Heart right ventricle (tissue), 16 donors: ENCODE measurements at regions of chr20 and their contacts with region 1.

Region 1: DNA sequence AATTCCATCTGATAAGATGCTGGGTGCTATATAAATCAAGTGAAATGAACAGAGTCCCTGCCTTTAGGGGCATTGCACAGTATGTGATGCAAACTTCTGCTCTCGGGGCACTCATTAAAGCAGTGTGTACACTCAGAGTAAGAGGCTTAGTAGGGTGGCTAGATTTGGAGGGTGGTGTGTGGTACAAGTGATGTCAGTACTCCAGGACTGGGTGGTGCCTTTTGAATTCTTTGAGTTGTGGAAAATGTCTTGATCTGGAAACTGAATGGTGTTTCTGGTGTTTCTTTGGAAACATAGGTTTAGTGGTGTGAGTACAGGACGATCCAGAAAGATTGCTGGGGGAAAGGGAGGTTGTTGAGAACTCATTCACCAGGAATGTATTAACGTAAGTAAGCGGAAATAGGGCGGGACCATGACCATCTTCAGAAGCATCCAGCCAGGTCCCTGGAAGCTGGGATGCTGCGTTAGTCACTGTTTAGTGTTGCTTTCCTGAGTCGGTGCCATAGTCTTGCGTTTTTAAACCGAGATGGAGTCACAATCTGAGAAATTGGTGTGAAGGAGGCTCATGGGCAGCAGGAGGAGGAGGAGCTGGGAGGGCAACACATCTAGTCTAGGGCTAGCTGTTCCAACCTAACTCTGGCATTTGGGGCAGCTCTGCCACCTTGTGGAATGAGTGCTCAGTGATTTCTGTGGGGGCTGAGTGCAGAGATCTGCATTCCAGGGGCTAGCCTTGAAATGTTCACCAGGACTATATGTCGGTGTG is 70.3 kb downstream of the SCAND1 start:
- DNase-seq: peak; percentile 59 to 70
- ATAC-seq: peak; percentile 81 to 91 (median 84)
- H3K4me3 ChIP-seq: no peak overlapping the region
- H3K27ac ChIP-seq: peak overlapping the region in 5 of 10 donors; percentile 1 to 61 (median 10)
- H3K4me1 ChIP-seq: peaks cover 0 to 32% (median 14%) of the 10 kb centered on the region in 9 donors
- H3K27me3 ChIP-seq: no peaks in the 10 kb centered on the region
- CTCF ChIP-seq: peak; percentile 42 to 82 (median 74)

Region 2: GRCh38 chr20:35368666-35369423 is 515.1 kb before region 1 on chr20:
- intact Hi-C with region 1: no loop called
- DNase-seq: peak; percentile 23 to 41
- ATAC-seq: peak; percentile 69 to 97 (median 93)
- H3K4me3 ChIP-seq: no peak overlapping the region
- H3K27ac ChIP-seq: peak overlapping the region in 8 of 10 donors; percentile 22 to 55 (median 36)
- H3K4me1 ChIP-seq: peaks cover 8 to 28% (median 21%) of the 10 kb centered on the region in 9 donors
- H3K27me3 ChIP-seq: no peaks in the 10 kb centered on the region
- CTCF ChIP-seq: no peak

Region 3: DNA sequence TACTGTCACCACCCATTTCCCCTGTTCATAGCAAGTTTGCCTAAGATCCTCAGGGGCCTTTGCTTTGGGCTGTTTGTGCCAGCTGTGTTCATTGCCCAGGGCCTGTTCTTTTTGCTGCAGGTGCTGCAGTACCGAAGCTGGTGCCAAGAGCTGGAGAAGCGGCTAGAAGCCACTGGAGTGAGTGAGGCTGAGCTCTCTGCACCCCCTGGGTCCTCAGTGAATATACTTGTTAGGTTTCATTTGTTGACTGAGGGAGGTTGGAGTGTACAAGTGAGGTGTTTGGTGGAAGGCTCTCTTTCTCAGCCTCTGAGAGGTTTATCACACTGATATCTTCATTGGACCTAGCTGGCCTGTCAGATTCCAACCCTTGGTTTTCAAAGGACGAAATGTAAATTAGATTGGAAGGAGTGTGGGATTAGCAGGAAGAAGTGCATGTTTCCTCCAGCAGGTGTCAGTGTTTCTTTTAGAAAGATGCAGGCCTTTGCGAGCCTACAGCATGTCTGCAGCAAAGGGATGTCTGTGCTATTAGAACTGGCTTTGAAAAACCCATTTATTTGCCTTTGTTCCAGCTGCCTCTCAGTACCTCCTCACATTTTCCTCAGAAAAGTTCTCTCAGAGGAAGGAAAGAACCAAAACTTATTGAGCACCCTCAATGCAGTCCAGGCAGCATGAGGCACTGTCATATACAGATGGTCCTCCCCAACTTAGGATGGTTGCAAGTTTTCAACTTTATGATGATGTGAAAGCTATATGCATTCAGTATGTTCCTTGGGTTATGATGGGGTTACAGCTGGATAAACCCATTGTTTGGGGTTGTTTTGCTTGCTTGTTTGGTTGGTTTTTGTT is 420.3 kb before region 1 on chr20:
- intact Hi-C with region 1: loop called in 2 of 10 experiments (anchors 5 to 10 kb)
- DNase-seq: peak in 1 of 2 donors; percentile 63
- ATAC-seq: peak; percentile 64 to 81 (median 72)
- H3K4me3 ChIP-seq: no peak overlapping the region
- H3K27ac ChIP-seq: no peak overlapping the region
- H3K4me1 ChIP-seq: no peaks in the 10 kb centered on the region
- H3K27me3 ChIP-seq: no peaks in the 10 kb centered on the region
- CTCF ChIP-seq: peak; percentile 57 to 85 (median 81)

Region 4: DNA sequence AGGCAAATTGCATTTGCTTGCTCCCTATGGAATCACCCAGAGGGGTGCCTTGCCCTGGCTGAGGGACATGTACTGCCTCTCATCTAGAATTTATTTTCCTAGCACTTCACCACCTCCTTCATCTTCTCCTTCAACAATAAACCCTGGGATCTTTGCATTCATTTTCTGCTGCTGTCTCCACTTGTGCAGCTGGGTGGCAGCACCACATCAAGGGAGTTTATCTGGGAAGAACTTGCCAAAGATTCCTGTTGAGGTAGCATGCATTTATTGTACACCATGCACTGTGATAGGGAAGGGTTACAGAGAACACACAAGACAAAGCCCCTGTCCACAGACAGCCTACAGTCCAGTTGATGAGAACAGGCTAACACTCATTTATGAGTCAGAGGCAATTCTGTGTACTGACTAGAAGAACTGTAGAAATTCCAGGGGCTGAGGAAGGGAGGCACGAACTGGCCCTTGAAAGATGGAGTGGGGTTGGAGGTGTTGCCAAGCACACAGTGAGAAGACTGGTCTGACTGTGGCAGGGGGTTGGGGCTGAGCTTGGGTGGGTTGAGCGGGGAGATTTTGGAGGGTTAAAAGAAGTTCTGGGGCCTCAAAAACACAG is 372.0 kb before region 1 on chr20:
- intact Hi-C with region 1: loop called in 2 of 10 experiments (anchors 10 kb)
- DNase-seq: no peak
- ATAC-seq: peak in 4 of 8 donors; percentile 28 to 45 (median 40)
- H3K4me3 ChIP-seq: no peak overlapping the region
- H3K27ac ChIP-seq: no peak overlapping the region
- H3K4me1 ChIP-seq: peaks cover 0 to 6% (median 0%) of the 10 kb centered on the region in 9 donors
- H3K27me3 ChIP-seq: no peaks in the 10 kb centered on the region
- CTCF ChIP-seq: peak; percentile 41 to 68 (median 55)

Region 5: GRCh38 chr20:35690265-35690664 is 193.7 kb before region 1 on chr20:
- intact Hi-C with region 1: loop called in 2 of 10 experiments (anchors 5 kb)
- DNase-seq: no peak
- ATAC-seq: no peak
- H3K4me3 ChIP-seq: no peak overlapping the region
- H3K27ac ChIP-seq: no peak overlapping the region
- H3K4me1 ChIP-seq: no peaks in the 10 kb centered on the region
- H3K27me3 ChIP-seq: no peaks in the 10 kb centered on the region
- CTCF ChIP-seq: no peak

Region 6: DNA sequence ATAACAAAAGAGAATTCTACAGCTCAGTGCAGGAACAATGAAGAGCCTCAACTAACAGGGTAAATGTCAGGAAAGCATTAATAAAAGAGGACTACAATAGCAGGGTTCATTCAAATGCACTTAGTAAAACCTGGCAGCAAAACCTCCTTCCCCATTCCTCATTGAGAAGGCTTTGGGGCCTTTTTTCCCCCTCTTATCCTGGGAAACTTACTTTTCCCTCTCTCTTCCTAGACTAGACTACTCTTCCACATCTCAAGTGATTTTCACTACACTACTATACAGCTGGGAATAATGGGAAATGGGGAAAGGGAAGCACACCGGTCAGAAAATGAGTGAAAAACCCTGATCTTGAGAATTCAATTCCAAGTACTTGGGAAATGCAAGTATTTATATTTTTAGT is 174.7 kb before region 1 on chr20:
- intact Hi-C with region 1: loop called in 3 of 10 experiments (anchors 5 to 10 kb)
- DNase-seq: no peak
- ATAC-seq: no peak
- H3K4me3 ChIP-seq: no peak overlapping the region
- H3K27ac ChIP-seq: no peak overlapping the region
- H3K4me1 ChIP-seq: peaks cover 0 to 49% (median 27%) of the 10 kb centered on the region in 9 donors
- H3K27me3 ChIP-seq: no peaks in the 10 kb centered on the region
- CTCF ChIP-seq: no peak

Region 7: GRCh38 chr20:35741892-35742740 is 141.8 kb before region 1 on chr20 and contains the start of gene RBM39:
- intact Hi-C with region 1: loop called in 8 of 10 experiments (anchors 2 to 10 kb)
- DNase-seq: peak; percentile 99 to 100
- ATAC-seq: peak; percentile 94 to 97 (median 96)
- H3K4me3 ChIP-seq: peak within 1 kb of the TSS; percentile 82 to 97 (median 86)
- H3K27ac ChIP-seq: peak within 1 kb of the TSS; percentile 97 to 100 (median 99)
- H3K4me1 ChIP-seq: peaks cover 3 to 60% (median 45%) of the 10 kb centered on the region in 9 donors
- H3K27me3 ChIP-seq: no peaks in the 10 kb centered on the region
- CTCF ChIP-seq: peak in 8 of 9 donors; percentile 39 to 75 (median 56)
- total RNA-seq, gene RBM39: 110 to 170 (median 124) TPM

Region 8: GRCh38 chr20:35907017-35907701 is 23.2 kb after region 1 on chr20:
- intact Hi-C with region 1: loop called in 1 of 10 experiments (anchors 1 kb)
- DNase-seq: peak; percentile 36 to 63
- ATAC-seq: peak; percentile 59 to 97 (median 93)
- H3K4me3 ChIP-seq: no peak overlapping the region
- H3K27ac ChIP-seq: peak overlapping the region in 9 of 10 donors; percentile 21 to 64 (median 49)
- H3K4me1 ChIP-seq: peaks cover 0 to 32% (median 19%) of the 10 kb centered on the region in 9 donors
- H3K27me3 ChIP-seq: no peaks in the 10 kb centered on the region
- CTCF ChIP-seq: no peak